Sigmoid colon (tissue), 7 donors: ENCODE measurements at regions of chr18 and their contacts with region 1.

Region 1: GRCh38 chr18:22223254-22223960 is 54.0 kb downstream of the GATA6 start:
- DNase-seq: peak; percentile 71
- H3K4me3 ChIP-seq: no peak overlapping the region
- H3K27ac ChIP-seq: no peak overlapping the region
- H3K4me1 ChIP-seq: no peaks in the 10 kb centered on the region
- H3K27me3 ChIP-seq: no peaks in the 10 kb centered on the region
- CTCF ChIP-seq: no peak
- EP300 ChIP-seq: no peak
- POLR2A ChIP-seq: no peak

Region 2: GRCh38 chr18:22282311-22283112 is 59.1 kb after region 1 on chr18:
- intact Hi-C with region 1: loop called (anchors 10 kb)
- DNase-seq: no peak
- H3K4me3 ChIP-seq: no peak overlapping the region
- H3K27ac ChIP-seq: peak overlapping the region in 2 of 4 donors; percentile 30 to 54
- H3K4me1 ChIP-seq: no peaks in the 10 kb centered on the region
- H3K27me3 ChIP-seq: no peaks in the 10 kb centered on the region
- CTCF ChIP-seq: no peak
- EP300 ChIP-seq: no peak
- POLR2A ChIP-seq: no peak

Region 3: DNA sequence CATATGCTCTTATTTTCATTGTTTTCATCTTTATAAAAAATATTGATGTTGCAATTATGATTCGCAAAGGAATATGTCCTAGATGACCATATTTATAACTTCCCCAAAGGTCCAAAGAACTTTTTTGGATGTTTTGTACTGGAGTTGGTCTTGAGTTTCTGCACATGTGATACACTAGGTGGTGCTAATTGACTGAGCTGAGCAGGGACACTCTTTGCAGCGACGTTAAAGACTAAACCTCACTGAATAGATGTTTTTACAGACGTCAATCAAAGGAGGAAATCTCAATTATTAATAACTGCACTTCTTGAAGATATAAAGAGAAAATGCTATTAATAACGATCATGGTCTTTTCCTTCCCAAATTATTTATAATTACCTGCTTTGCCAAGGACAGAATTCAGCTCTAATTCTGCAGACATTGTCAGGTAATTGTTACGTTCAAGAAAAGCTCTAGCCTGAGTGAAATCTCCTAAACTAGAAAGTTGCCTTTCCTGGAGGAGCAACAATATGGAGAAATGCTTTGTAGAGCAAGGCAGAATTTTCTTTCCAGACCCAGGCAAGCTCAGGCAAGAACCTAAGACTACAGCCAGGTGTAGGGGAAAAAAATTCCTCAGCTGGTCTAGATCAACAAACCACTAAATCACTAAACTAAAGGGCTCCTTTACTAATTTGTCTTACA is 590.4 kb after region 1 on chr18:
- intact Hi-C with region 1: no loop called
- DNase-seq: no peak
- H3K4me3 ChIP-seq: no peak overlapping the region
- H3K27ac ChIP-seq: no peak overlapping the region
- H3K4me1 ChIP-seq: no peaks in the 10 kb centered on the region
- H3K27me3 ChIP-seq: no peaks in the 10 kb centered on the region
- CTCF ChIP-seq: peak in 1 of 4 experiments; percentile 27
- EP300 ChIP-seq: no peak
- POLR2A ChIP-seq: no peak